Left cardiac atrium (tissue), 4 donors: ENCODE measurements at regions of chr2 and their contacts with region 1.

Region 1: DNA sequence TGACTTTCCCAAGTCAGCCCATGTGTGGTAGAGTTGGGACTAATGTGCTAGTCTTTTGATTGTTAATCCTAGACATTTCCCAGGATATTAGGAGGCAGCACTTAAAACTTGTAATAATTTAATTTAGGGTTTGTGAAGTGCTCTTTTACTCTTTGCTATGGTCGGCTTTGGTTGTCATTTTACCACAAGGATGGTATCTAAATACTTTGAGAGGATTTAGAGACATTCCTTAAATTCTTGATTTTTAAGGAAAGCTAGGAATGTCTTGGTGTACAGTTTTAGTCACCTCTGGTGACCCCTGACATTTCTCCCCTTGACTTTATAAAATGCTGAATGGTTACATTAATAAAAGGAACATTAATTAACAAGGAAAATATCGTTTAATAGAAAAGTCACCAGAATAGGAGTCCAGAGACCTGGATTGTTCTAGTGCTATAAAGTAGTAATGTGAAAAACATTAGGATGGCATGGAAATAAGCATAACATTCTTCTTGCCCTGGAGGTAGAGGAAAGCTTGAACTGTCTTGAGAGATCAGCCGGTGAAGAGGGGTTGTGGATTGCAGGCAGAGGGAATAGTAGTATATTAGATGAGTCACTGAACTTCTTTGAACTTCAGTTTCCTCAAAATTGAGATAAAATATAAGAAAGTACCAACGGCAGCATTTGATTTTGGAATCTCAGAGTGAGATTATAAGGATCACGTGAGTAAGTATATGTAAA is 209.2 kb downstream of the MCFD2 start:
- DNase-seq: no peak
- ATAC-seq: peak in 1 of 2 donors; percentile 56

Region 2: DNA sequence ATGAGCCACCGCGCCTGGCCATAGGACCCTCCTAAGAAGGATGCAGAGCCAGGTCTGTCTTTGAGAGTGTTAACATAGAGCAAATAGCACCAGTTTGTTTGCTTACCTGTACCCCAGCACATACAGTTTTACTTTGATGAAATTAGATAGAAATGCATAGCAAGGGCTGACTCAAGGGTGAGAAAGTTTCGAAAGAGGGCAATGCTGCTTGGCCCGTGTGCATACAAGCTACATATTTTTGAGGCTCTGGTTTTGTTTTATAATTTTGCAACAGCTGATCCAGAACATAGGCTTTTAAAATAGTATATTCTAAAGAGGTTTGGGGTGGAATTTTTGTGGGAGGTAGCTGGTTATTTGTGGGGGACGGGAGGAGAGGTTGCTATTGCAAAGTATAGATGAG is 57.4 kb after region 1 on chr2:
- intact Hi-C with region 1: loop called in 1 of 2 experiments (anchors 5 kb)
- DNase-seq: no peak
- ATAC-seq: no peak